ENCODE measurements at regions of chr19 and their contacts with region 1.

Region 1: GRCh38 chr19:41821003-41821735 is 23.3 kb downstream of the LYPD4 start:
- DNase-seq: peak; percentile 78

Region 2: DNA sequence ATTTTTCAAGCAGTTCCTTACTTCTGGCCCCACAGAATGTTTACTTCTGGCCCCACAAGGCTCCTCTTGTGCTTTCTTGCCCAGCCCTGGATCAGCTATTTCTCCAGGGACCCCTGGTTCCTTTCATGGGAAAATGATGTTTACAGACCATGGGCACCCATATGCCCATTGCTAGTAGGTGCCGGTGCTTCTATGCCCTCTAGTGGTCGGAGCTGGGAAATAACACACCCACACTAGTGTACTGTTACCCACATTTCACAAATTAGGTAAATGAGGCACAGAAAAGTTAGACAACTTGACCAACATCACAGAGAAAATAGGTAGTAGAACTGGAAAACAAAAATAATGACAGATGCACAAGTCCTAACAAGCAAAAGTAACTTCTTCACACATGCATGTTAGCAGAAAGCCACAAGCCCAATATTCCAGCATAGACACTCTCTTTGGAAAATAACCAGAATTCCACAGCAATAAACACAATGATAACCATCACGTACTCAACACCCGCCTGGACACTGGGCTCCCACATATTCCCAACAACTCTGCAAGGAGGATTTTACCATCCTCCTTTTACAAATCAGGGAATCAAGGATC is 67.1 kb before region 1 on chr19:
- CTCF ChIA-PET with region 1: interaction called, 14 read pairs
- POLR2A ChIA-PET with region 1: no interaction called
- DNase-seq: peak; percentile 30

Region 3: GRCh38 chr19:41795031-41795461 is 26.1 kb before region 1 on chr19:
- CTCF ChIA-PET with region 1: interaction called, 11 read pairs
- POLR2A ChIA-PET with region 1: no interaction called
- DNase-seq: peak; percentile 27